Gastrocnemius medialis (tissue), 4 donors: ENCODE measurements at regions of chr20 and their contacts with region 1.

Region 1: DNA sequence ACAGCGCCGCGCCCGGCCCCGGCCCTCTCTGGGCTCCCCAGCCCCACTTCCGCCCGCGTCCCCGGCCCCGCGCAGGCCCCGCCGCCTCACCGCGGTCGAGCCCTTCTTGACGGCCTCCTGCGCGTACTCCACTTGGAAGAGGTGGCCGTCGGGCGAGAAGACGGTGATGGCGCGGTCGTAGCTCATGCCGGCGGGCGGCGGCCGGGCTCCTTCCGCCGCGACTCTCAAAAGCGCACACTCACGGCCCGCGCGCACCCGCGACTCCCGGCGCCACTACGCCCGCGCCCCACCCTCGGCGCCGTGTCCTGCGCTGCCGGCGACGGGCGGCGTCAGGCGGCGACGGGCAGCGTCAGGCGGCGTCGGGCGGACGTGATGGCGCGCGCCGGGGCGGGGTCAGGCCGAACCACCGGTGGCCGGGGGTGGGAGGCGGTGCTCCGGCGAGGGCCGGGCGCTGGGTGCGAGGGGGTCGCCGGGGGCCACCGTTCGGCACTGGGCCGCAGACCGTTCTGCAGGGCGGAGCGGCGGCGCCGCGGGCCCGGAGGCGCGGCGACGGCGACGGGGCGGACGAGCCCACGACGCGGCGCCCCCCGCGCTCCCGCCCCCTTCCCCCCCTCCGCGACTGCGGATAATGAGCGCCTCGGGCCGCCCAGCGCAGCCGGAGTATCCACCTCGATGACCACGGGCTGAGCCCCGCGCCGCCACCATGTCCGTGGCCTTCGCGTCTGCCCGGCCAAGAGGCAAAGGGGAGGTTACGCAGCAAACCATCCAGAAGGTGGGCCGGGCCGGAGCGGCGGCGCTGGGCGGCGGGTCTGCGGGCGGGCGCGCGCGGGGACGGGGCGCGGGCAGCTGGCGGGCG is at the starts of genes PSMA7 and SS18L1:
- DNase-seq: peak; percentile 71 to 80
- ATAC-seq: peak; percentile 73 to 79
- H3K4me3 ChIP-seq: peak within 1 kb of the TSS; percentile 80 to 95 (median 88)
- H3K27ac ChIP-seq: peak within 1 kb of the TSS; percentile 91 to 96 (median 95)
- H3K4me1 ChIP-seq: peaks cover 38 to 53% of the 10 kb centered on the region in 2 donors
- H3K27me3 ChIP-seq: no peaks in the 10 kb centered on the region
- CTCF ChIP-seq: no peak
- POLR2A ChIP-seq: peak; percentile 99
- total RNA-seq, gene PSMA7: 632 to 1,338 (median 1,003) TPM
- total RNA-seq, gene SS18L1: 11.5 to 31.8 (median 16.9) TPM

Region 2: GRCh38 chr20:62025832-62026563 is 117.3 kb before region 1 on chr20:
- in situ Hi-C with region 1: loop called in 3 of 4 experiments (anchors 10 to 25 kb)
- intact Hi-C with region 1: no loop called
- DNase-seq: no peak
- ATAC-seq: peak; percentile 73 to 74
- H3K4me3 ChIP-seq: no peak overlapping the region
- H3K27ac ChIP-seq: peak overlapping the region; percentile 4 to 56 (median 21)
- H3K4me1 ChIP-seq: peaks cover 29 to 44% of the 10 kb centered on the region in 2 donors
- H3K27me3 ChIP-seq: no peaks in the 10 kb centered on the region
- CTCF ChIP-seq: peak; percentile 33 to 50 (median 36)
- POLR2A ChIP-seq: no peak

Region 3: DNA sequence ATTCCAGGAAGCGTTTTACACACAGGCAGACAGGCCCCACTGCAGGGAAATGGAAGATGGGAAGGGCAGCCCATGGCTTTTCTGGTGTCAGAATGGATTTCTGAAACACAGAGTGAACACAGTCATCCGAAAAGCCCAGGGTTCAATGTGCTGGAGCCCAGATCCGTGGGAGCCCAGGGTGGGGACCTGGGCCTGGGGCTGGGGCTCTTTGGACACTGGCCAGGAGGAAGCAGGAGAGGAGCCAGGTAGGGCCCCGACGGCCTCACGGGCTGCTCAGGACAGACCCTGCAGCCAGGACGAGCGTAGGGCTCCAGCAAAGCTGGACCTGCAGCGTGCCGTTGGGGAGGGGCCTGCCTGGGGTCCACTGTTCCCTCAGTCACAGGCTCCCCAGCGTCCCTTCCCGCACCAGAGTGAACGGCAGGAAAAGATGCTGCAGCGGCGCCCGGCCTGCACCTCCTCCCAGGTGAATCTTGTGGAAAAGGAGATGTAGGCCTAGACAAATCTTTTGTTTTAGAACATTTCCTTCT is 45.4 kb before region 1 on chr20:
- in situ Hi-C with region 1: no loop called
- intact Hi-C with region 1: no loop called
- DNase-seq: no peak
- ATAC-seq: no peak
- H3K4me3 ChIP-seq: no peak overlapping the region
- H3K27ac ChIP-seq: no peak overlapping the region
- H3K4me1 ChIP-seq: no peaks in the 10 kb centered on the region
- H3K27me3 ChIP-seq: peaks cover 0 to 10% (median 0%) of the 10 kb centered on the region in 3 donors
- CTCF ChIP-seq: no peak
- POLR2A ChIP-seq: no peak

Region 4: DNA sequence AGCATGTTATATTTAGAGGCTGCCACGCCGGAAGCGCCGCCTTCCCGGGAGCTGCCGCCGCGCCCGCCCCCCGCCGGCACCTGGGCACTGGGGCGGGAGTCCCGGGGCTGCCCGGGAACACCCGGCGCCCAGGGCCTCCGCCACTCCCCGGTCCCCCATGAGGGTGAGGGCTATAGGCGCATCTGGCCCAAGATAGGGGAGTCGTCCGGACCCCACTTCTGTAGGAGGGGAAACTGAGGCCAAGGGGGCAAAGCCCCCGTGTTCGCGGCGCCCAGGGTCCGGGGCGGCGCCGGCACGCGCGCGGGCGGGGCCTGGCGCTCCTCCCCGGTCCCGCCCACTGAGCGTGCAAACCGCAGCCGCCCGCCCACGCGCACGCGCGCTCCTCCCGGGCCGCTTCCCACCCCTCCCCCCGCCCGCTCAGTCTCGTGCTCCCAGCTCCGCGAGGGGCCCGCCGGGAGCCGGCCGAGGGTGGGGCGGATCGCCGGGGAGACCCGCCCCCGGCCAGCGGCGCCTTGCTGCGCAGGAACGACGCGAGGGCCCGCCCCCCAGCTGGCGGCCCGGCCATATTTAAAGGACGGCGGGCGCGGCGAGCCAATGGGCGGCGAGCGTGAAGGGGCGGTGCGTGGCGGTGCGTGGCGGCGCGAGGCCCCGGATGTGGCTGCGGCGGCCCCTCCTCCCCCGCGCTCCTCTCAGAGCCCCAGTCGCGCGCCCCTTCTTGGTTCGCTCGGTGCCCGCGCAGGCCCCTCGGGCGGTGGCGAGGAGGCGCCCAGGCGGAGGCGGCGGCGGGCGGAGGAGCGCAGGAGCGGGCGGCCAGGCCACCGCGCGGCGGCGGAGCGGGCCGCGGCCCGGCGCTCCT is 21.3 kb before region 1 on chr20 and contains the start of gene LSM14B:
- in situ Hi-C with region 1: no loop called
- intact Hi-C with region 1: loop called (anchors 1 kb)
- DNase-seq: peak; percentile 92 to 96
- ATAC-seq: peak; percentile 68 to 71
- H3K4me3 ChIP-seq: peak within 1 kb of the TSS; percentile 69 to 86 (median 74)
- H3K27ac ChIP-seq: peak within 1 kb of the TSS; percentile 95 to 98 (median 96)
- H3K4me1 ChIP-seq: peaks cover 45 to 56% of the 10 kb centered on the region in 2 donors
- H3K27me3 ChIP-seq: no peaks in the 10 kb centered on the region
- CTCF ChIP-seq: peak in 1 of 5 experiments; percentile 21
- POLR2A ChIP-seq: peak; percentile 83 to 86
- total RNA-seq, gene LSM14B: 28.0 to 52.5 (median 36.2) TPM

Region 5: DNA sequence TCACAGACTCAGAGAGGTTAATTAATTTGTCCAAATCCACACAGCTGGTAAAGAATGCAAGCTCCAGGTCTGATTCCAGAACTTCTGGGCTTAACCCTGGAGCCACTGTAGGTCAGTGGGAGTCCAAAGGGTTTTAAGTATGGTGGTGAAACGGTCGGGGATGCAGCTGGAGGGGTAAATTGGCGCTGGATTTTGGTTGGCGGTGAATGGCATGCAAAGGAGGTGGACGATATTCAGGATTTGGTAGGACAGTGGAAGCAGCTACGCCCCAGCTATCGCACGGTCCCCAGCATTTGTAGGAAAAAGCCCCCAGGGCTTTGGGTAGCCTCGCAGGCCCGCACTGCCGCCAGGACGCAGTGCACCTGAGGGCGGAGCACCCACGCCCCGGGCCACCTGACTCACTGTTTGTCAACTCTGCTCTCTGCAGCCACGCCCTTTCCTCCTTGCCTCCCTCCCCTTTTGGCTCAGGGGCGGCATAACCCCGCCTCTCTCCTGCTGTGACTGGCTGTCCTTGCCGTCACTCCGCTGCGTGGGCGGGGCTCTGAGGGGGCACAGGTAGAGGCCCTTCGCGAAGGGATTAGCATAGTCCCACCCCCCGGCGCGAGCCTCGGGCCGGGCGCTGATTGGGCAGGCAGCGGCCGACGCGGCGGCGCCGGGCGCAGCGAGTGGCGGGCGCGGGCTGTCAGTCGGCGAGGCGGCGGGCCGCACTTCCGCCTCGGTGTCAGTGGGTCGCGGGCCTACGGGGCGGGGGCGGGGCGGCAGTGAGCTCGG is 94.6 kb after region 1 on chr20 and contains the start of gene OSBPL2:
- in situ Hi-C with region 1: no loop called
- intact Hi-C with region 1: loop called (anchors 5 kb)
- DNase-seq: peak; percentile 99
- ATAC-seq: peak; percentile 90
- H3K4me3 ChIP-seq: peak within 1 kb of the TSS; percentile 63 to 86 (median 74)
- H3K27ac ChIP-seq: peak within 1 kb of the TSS; percentile 87 to 96 (median 92)
- H3K4me1 ChIP-seq: peaks cover 42 to 57% of the 10 kb centered on the region in 2 donors
- H3K27me3 ChIP-seq: no peaks in the 10 kb centered on the region
- CTCF ChIP-seq: no peak
- POLR2A ChIP-seq: peak; percentile 80 to 84
- total RNA-seq, gene OSBPL2: 15.8 to 26.4 (median 19.6) TPM

Region 6: GRCh38 chr20:62675156-62675876 is 532.0 kb after region 1 on chr20:
- in situ Hi-C with region 1: no loop called
- intact Hi-C with region 1: no loop called
- DNase-seq: no peak
- ATAC-seq: no peak
- H3K4me3 ChIP-seq: no peak overlapping the region
- H3K27ac ChIP-seq: no peak overlapping the region
- H3K4me1 ChIP-seq: no peaks in the 10 kb centered on the region
- H3K27me3 ChIP-seq: peaks cover 10 to 37% (median 16%) of the 10 kb centered on the region in 3 donors
- CTCF ChIP-seq: no peak
- POLR2A ChIP-seq: no peak

Region 7: GRCh38 chr20:62793912-62794724 is 650.8 kb after region 1 on chr20:
- in situ Hi-C with region 1: no loop called
- intact Hi-C with region 1: loop called (anchors 2 kb)
- DNase-seq: peak; percentile 89 to 92
- ATAC-seq: peak; percentile 78
- H3K4me3 ChIP-seq: peak overlapping the region; percentile 75 to 89 (median 76)
- H3K27ac ChIP-seq: peak overlapping the region; percentile 89 to 93 (median 92)
- H3K4me1 ChIP-seq: peaks cover 13 to 15% of the 10 kb centered on the region in 2 donors
- H3K27me3 ChIP-seq: no peaks in the 10 kb centered on the region
- CTCF ChIP-seq: no peak
- POLR2A ChIP-seq: peak; percentile 85 to 93